ENCODE measurements at regions of chr15 and their contacts with region 1.

Region 1: DNA sequence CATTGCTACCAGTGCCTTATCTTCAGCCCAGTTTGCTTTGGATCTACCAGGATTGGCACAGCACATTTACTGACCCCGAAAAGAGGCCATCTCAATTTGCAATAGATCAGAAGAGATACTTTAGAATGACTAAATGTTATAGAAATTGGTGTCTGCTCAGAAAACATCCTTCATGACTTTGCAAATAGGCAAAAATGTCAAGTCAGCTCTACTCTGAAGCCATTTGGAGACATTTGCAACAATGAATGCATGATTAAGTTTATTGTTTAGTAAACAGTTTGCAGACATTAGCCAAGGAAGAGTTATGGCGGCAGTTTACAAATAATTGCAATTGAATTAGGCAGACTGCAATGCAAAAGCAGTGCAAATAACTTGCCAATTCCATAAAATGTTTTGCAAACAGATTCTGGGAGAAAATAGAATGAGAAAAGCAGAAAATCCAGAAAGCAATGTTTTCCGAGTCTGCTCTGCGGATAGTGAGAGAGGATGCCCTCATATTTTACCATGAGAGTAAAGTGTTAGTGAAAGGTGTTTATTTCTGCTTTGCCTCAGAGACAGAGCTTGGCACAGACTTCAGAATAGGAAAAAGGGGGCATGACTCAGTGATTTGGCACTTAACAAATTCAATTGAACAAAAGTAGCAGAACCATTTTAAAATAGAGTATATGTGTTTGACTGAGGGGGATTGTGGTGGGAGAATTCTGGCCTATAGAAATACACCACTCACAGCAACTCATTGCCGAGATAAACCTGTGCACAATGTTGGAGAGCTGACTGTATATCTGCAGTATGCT is 334.9 kb upstream of the NR2F2 start:
- DNase-seq: no peak
- H3K4me3 Mint-ChIP-seq: no peak overlapping the region
- H3K27ac Mint-ChIP-seq: no peak overlapping the region
- H3K4me1 Mint-ChIP-seq: peaks cover 14% of the 10 kb centered on the region
- H3K27me3 Mint-ChIP-seq: peaks cover 16% of the 10 kb centered on the region

Region 2: GRCh38 chr15:95446854-95447253 is 548.7 kb before region 1 on chr15:
- intact Hi-C with region 1: loop called (anchors 2 kb)
- DNase-seq: peak; percentile 33
- H3K4me3 Mint-ChIP-seq: peak overlapping the region; percentile 4
- H3K27ac Mint-ChIP-seq: peak overlapping the region; percentile 64
- H3K4me1 Mint-ChIP-seq: peaks cover 30% of the 10 kb centered on the region
- H3K27me3 Mint-ChIP-seq: no peaks in the 10 kb centered on the region